OCI-LY7 (cell line): ENCODE measurements at regions of chr11 and their contacts with region 1.

Region 1: GRCh38 chr11:62787005-62787759 is at the start of gene TMEM179B:
- DNase-seq: peak; percentile 99
- H3K4me3 ChIP-seq: peak within 1 kb of the TSS; percentile 97
- H3K27ac ChIP-seq: peak within 1 kb of the TSS; percentile 79
- H3K4me1 ChIP-seq: peaks cover 37% of the 10 kb centered on the region
- CTCF ChIP-seq: peak; percentile 33; the same call in 1 of the 2 replicates
- total RNA-seq, gene TMEM179B: 22.8 and 33.1 TPM in 2 replicates

Region 2: DNA sequence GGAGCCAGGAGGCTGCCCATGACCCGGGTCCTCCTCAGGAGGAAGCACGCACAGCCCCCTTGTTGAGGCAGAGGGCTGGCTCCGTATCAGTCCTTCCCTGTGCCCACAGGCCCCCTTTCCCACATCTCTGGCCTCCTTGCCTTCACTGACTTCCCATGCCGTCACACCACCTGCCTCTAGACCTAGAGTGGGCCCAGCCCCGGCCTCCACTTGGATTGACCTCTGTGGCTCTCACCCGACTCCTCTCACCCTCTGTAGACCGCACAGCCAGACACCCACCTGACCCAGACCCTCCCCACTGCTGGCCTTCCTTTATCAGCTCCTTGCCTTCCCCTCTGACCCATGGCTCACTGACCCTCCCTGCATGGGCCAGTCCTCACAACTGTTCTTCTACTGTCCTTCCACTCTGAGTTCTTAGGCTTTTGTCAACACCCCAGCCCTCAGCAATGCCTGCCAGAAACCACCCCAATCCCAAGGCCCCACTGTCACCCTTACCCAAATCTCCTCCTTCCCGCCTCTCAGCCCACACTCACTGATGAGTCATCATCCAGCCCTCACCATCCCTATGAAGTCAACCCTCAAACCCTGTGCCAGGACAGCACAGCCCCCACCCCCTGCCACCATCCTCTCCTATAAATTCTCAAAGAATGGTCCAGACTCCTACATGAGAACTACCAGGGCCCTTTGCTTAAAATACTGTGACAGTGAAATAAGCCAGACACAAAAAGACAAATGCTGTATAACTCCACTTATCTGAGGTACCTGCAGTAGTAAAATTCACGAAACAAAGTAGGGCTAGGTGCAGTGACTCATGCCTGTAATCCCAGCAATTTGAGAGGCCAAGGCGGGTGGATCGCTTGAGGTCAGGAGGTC is 314.9 kb before region 1 on chr11:
- CTCF ChIA-PET with region 1: no interaction called
- POLR2A ChIA-PET with region 1: no interaction called
- intact Hi-C with region 1: no loop called
- DNase-seq: no peak
- H3K4me3 ChIP-seq: no peak overlapping the region
- H3K27ac ChIP-seq: no peak overlapping the region
- H3K4me1 ChIP-seq: no peaks in the 10 kb centered on the region
- CTCF ChIP-seq: no peak

Region 3: DNA sequence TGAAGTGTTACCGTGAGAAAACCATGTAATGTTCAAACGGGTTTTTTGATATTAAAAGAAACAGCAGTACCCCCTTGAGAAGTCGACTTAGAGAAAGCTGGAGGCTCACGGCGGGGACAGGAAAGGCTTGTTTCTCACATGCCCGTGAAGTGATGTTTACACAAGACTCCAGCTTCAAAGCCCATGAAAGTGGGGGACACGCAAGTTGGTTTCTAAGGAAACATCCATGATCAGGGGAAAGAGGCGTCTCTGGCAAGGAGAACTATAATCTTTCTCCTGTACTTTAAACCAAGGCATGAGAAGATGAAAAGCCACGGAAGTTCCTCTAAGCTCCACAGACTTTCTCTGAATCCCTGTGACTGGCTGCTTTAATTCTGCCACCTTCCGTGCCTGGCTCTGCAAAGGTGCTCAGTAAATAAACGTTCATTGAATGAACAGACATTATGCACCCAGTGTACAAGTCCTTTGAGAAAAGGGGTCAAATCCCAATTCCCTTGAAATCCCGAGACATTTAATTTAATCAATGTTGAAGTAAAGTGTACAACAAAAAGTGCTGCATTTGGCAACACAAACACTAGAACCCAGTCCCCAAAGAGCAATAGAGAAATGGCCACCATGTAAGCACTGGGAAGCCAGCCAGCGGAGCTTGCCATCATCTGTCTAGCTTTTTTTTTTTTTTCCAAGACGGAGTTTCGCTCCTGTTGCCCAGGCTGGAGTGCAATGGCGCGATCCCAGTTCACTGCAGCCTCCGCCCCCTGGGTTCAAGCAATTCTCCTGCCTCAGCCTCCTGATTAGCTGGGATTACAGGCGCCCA is 299.2 kb before region 1 on chr11:
- CTCF ChIA-PET with region 1: no interaction called
- POLR2A ChIA-PET with region 1: no interaction called
- intact Hi-C with region 1: no loop called
- DNase-seq: no peak
- H3K4me3 ChIP-seq: no peak overlapping the region
- H3K27ac ChIP-seq: no peak overlapping the region
- H3K4me1 ChIP-seq: no peaks in the 10 kb centered on the region
- CTCF ChIP-seq: no peak

Region 4: GRCh38 chr11:62678770-62679696 is 108.1 kb before region 1 on chr11 and contains the start of gene UBXN1:
- CTCF ChIA-PET with region 1: no interaction called
- POLR2A ChIA-PET with region 1: interaction called, 4 read pairs
- intact Hi-C with region 1: loop called (anchors 5 kb)
- DNase-seq: peak; percentile 87
- H3K4me3 ChIP-seq: peak within 1 kb of the TSS; percentile 93
- H3K27ac ChIP-seq: peak within 1 kb of the TSS; percentile 57
- H3K4me1 ChIP-seq: peaks cover 35% of the 10 kb centered on the region
- CTCF ChIP-seq: no peak
- total RNA-seq, gene UBXN1: 101 and 123 TPM in 2 replicates

Region 5: GRCh38 chr11:62805076-62805892 is 18.1 kb after region 1 on chr11 and contains the start of gene NXF1:
- CTCF ChIA-PET with region 1: interaction called, 3 read pairs
- POLR2A ChIA-PET with region 1: interaction called, 7 read pairs
- intact Hi-C with region 1: loop called (anchors 2 kb)
- DNase-seq: peak; percentile 97
- H3K4me3 ChIP-seq: peak within 1 kb of the TSS; percentile 89
- H3K27ac ChIP-seq: peak within 1 kb of the TSS; percentile 77
- H3K4me1 ChIP-seq: peaks cover 31% of the 10 kb centered on the region
- CTCF ChIP-seq: 0 out of 2 replicates have a peak, but pooled peaks have one; percentile 27
- total RNA-seq, gene NXF1: 35.1 and 53.3 TPM in 2 replicates

Region 6: DNA sequence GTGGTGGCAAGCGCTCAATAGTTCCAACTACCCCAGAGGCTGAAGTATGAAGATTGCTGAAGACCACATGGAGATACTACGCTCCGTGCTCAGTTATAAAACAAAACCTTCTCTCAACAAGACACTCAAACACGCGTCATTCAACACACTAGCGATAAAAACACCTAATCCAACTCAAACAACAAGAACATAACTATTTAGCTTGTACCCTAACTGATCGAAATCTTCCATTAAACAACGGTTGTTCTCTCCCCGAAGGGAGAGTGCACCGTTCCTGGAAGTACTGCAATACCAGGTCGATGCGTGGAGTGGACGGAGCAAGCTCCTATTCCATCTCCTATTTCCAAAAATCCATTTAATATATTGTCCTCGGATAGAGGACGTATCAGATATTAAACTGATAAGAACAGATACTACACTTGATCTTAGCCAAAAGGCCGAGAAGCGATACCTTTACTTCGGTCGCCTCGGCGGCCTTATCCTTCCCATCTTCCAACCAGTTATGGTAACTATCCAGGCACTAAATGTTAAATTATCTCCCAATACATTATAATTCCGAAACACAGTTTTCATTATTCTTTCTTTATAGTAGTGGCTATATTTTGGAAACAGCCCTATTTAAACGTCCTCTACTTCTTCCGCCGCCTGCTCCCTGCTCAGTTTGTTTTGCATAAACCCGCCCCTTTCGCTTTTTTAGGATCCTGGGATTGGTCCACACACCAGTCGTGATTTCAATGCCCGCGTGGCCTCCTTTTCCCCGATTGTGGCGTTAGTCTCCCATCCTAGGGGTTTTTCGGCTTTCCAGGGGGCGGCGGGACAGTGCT is 54.4 kb after region 1 on chr11:
- CTCF ChIA-PET with region 1: no interaction called
- POLR2A ChIA-PET with region 1: interaction called, 4 read pairs
- intact Hi-C with region 1: loop called (anchors 1 kb)
- DNase-seq: peak; percentile 97
- H3K4me3 ChIP-seq: peak overlapping the region; percentile 94
- H3K27ac ChIP-seq: peak overlapping the region; percentile 90
- H3K4me1 ChIP-seq: peaks cover 29% of the 10 kb centered on the region
- CTCF ChIP-seq: no peak

Region 7: GRCh38 chr11:63023841-63024648 is 236.9 kb after region 1 on chr11:
- CTCF ChIA-PET with region 1: interaction called, 5 read pairs
- POLR2A ChIA-PET with region 1: no interaction called
- intact Hi-C with region 1: loop called (anchors 5 kb)
- DNase-seq: peak; percentile 73
- H3K4me3 ChIP-seq: no peak overlapping the region
- H3K27ac ChIP-seq: no peak overlapping the region
- H3K4me1 ChIP-seq: no peaks in the 10 kb centered on the region
- CTCF ChIP-seq: peak; percentile 100